Activated T-helper 2 cell treated with anti-CD3 and anti-CD28 coated beads, Interferon-gamma antibody, Interleukin-2, Interleukin-4, amounts not matched to agents 10 μg/mL and 5 μg/mL and 100 μg/mL, durations not matched to agents 14 hours and 24 hours and 36 hours (primary cell): ENCODE measurements at regions of chr20 and their contacts with region 1.

Region 1: GRCh38 chr20:6767536-6768227 is at the start of gene BMP2:
- DNase-seq: no peak
- H3K4me3 Mint-ChIP-seq: peak within 1 kb of the TSS; percentile 52
- H3K27ac Mint-ChIP-seq: no peak within 1 kb of the TSS
- H3K4me1 Mint-ChIP-seq: peaks cover 2% of the 10 kb centered on the region
- H3K27me3 Mint-ChIP-seq: peaks cover 46% of the 10 kb centered on the region
- total RNA-seq, gene BMP2: 0.07 and 0.25 TPM in 2 replicates

Region 2: DNA sequence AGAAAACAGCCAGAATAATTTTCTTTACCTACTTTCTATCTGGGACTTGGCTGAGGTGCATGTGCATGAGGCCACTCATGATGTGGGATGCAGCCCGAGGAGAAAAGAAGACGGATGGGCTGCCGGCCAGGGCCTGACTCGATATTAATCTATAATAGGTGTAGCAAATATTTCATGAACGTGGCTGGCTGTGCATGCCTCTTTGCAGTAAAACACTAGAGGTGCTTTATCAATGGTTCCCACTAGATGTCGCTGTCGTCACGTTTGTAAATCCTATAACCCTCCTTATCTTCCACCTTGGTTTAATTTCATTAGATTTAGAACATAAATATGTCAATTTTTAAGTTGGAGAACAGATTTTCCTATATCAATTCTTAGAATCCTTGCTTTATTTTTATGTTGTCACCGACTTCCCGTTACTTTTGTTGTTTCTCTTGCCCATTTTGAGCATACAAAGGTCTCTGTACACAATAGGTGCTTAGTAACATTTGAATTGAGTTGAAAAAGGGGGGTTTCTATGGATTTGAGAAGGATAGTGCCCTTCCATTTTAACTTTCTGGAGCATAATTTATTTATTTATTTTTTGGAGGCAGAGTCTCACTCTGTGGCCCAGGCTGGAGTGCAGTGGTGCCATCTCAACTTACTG is 625.2 kb before region 1 on chr20:
- intact Hi-C with region 1: loop called (anchors 5 kb)
- DNase-seq: peak; percentile 12
- H3K4me3 Mint-ChIP-seq: no peak overlapping the region
- H3K27ac Mint-ChIP-seq: no peak overlapping the region
- H3K4me1 Mint-ChIP-seq: peaks cover 2% of the 10 kb centered on the region
- H3K27me3 Mint-ChIP-seq: no peaks in the 10 kb centered on the region

Region 3: GRCh38 chr20:7094438-7094997 is 326.8 kb after region 1 on chr20:
- intact Hi-C with region 1: loop called (anchors 10 kb)
- DNase-seq: no peak
- H3K4me3 Mint-ChIP-seq: no peak overlapping the region
- H3K27ac Mint-ChIP-seq: no peak overlapping the region
- H3K4me1 Mint-ChIP-seq: no peaks in the 10 kb centered on the region
- H3K27me3 Mint-ChIP-seq: no peaks in the 10 kb centered on the region

Region 4: GRCh38 chr20:7285918-7286556 is 518.4 kb after region 1 on chr20:
- intact Hi-C with region 1: loop called (anchors 5 kb)
- DNase-seq: peak; percentile 9
- H3K4me3 Mint-ChIP-seq: no peak overlapping the region
- H3K27ac Mint-ChIP-seq: no peak overlapping the region
- H3K4me1 Mint-ChIP-seq: no peaks in the 10 kb centered on the region
- H3K27me3 Mint-ChIP-seq: no peaks in the 10 kb centered on the region

Region 5: GRCh38 chr20:7866285-7866684 is 1098.6 kb after region 1 on chr20:
- intact Hi-C with region 1: loop called (anchors 10 kb)
- DNase-seq: no peak
- H3K4me3 Mint-ChIP-seq: no peak overlapping the region
- H3K27ac Mint-ChIP-seq: no peak overlapping the region
- H3K4me1 Mint-ChIP-seq: no peaks in the 10 kb centered on the region
- H3K27me3 Mint-ChIP-seq: no peaks in the 10 kb centered on the region